Left colon (tissue), 2 donors: ENCODE measurements at regions of chr15 and their contacts with region 1.

Region 1: DNA sequence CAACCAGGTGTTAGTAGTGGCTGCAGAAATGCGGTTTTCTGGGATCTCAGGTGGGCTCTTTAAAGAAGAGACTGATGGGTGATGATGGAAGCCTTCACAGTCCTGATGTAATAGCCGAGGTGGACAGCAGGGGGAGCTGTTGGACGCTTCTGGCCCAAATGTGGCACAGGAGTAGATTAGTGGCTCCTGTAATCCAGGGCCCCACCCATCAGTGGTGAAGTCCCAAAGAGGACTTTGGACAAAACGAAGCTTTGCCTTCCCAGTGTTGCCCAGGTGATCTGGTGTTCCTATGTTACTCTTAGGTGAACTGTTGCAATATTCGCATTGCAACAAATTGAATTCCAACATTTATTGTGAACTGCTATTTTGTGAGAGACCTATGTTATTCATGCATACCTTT is 31.8 kb upstream of the MYZAP start:
- DNase-seq: peak; percentile 86 to 89
- ATAC-seq: peak; percentile 96

Region 2: DNA sequence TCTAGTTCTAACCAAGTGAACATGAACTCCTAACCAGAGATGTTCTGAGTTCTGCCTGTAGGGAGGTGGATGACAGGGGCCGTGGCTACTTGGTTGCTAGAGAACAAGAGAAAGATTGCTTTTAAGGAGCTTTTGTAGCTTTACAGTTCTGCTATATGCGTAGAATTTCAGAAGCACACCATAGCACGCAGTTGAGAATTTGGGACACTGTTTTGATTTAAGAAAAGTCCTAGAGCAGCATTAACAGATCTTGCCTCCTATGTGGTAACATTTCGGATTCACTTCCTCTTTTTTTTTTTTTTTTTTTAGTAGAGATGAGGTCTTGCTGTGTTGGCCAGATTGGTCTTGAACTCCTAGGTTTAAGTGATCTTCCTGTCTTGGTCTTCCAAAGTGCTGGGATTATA is 459.7 kb before region 1 on chr15:
- intact Hi-C with region 1: no loop called
- DNase-seq: no peak
- ATAC-seq: peak; percentile 15

Region 3: DNA sequence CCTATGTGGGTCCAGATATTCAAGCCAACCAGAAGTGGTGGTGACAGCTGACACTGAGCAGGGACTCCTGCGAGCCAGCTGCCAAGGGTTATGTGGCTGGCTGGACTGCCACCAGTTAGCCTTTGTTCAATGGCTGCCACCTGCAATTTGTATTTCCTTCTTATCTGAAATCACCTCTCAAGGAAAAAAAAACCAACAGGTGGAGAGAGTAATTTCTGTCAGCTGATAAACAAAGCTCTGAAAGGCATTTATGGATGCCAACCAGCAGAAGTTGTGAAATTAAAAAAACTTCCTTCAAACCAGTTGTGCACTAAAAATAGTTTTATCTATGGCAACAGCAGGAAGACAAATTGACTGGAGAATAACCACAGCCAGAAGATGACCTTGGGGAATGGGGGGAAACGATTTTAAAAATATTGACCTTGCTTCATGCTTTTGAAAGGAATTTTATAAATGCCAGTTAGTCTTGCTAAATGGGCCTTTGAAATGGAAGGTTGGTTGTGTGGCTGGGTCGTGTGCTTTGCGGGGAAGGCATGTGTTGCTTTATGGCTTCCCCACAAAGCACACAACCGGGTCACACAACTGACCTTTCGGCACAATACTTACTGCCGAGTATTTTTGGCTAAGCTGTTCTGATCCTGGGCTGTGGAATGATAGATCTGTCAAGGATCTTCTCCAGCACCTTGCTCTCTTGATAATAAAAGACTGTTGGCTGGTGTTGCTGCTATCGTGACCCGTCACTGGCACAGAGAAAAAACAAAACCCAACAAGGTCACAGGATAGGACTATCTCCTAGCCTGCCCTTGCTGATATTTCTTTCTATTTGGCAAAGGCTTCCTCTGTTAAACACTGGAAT is 35.4 kb after region 1 on chr15:
- intact Hi-C with region 1: no loop called
- DNase-seq: no peak
- ATAC-seq: peak; percentile 56

Region 4: DNA sequence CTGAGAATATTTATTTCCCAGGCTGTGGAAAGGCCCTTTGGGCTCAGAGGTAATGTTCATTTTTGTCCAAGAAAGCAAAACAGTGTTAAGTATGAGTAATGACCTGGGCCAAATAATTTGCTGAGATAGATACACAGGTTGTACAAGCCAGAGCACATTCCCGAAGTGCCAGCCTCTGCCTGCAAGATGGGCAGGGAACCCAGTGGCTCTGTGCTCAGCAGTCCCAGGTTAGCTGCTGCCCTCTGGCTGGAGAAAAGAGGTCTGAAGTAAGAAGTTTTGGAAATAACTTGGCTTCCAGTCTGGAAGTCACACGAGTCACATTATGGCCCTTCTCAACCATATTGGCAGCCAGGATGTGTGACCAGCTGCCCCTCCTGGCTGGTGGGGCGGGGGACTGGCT is 52.1 kb after region 1 on chr15:
- intact Hi-C with region 1: loop called in 1 of 2 experiments (anchors 5 kb)
- DNase-seq: peak; percentile 65 to 75
- ATAC-seq: peak; percentile 52